AG04449 (cell line): ENCODE measurements at regions of chr3 and their contacts with region 1.

Region 1: DNA sequence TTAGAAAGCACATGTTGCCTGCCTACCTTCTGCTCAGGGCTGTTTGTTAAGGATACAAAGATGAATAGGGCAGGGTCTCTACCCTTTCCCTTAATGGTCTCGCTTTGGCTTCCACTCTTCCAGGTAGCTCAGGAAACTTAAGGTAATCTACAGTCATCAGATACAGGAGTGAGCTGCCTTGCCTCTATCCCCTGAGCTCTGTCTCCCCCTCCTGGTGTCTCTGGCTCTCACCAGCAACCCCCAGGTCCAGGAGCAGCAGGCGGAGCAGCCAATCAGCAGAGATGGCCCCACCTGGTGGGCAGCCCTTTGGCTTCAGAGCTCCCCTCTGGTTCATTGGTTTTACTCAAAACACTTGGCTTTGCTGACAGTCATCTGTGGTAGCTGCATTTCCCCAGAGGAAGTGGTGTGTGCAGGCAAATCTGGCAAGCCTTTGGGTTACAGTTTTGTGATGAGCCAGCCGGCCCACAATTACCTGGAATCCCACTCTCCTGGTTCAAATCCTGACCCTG is 8.5 kb upstream of the CX3CR1 start:
- DNase-seq: no peak
- H3K4me3 ChIP-seq: no peak overlapping the region
- CTCF ChIP-seq: peak; percentile 93

Region 2: GRCh38 chr3:39101022-39101689 is 187.2 kb before region 1 on chr3:
- CTCF ChIA-PET with region 1: interaction called, 41 read pairs
- POLR2A ChIA-PET with region 1: no interaction called
- DNase-seq: no peak
- H3K4me3 ChIP-seq: no peak overlapping the region
- CTCF ChIP-seq: peak; percentile 68

Region 3: GRCh38 chr3:39126532-39127071 is 161.8 kb before region 1 on chr3:
- CTCF ChIA-PET with region 1: interaction called, 545 read pairs
- POLR2A ChIA-PET with region 1: no interaction called
- DNase-seq: no peak
- H3K4me3 ChIP-seq: no peak overlapping the region
- CTCF ChIP-seq: peak; percentile 80

Region 4: DNA sequence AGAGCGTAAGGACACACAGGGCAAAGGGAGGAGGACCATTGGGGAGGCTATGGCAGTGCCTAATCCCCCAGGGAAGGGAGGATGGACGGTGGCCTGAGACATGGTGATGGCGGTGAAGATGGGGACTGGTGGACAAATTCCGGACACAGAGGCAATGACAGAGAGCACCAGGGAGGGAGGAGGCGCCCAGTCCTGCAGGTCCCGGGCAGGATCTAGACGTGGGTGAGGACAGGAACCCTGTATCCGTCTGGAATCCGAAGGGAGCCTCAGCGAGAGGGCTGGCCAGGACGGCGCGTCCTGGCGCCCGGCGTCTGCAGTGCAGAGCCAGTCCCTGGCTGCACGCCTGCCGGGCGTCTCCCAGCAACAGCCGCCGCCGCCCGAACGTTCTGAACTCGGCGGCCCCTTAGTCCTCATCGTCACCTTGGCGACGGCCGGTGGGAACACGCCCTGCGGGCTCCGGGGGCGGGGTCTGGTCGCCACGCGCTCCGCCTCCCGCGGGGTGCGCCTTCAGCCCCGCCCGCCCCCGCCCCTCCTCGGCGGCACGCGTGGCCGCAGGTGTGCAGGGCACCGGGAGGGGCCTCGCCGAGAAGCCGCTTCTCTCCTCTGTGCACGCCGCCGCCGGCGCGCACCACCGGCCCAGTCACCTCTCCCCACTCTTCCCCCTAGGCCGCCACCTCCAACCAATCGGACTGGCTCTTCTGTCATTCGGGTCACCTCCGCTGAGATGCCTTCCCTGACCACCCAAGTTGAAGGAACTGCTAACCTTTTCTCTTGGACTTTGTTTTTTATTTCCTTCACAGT is 107.6 kb before region 1 on chr3:
- CTCF ChIA-PET with region 1: interaction called, 574 read pairs
- POLR2A ChIA-PET with region 1: no interaction called
- DNase-seq: no peak
- H3K4me3 ChIP-seq: peak overlapping the region; percentile 44
- CTCF ChIP-seq: peak; percentile 23

Region 5: DNA sequence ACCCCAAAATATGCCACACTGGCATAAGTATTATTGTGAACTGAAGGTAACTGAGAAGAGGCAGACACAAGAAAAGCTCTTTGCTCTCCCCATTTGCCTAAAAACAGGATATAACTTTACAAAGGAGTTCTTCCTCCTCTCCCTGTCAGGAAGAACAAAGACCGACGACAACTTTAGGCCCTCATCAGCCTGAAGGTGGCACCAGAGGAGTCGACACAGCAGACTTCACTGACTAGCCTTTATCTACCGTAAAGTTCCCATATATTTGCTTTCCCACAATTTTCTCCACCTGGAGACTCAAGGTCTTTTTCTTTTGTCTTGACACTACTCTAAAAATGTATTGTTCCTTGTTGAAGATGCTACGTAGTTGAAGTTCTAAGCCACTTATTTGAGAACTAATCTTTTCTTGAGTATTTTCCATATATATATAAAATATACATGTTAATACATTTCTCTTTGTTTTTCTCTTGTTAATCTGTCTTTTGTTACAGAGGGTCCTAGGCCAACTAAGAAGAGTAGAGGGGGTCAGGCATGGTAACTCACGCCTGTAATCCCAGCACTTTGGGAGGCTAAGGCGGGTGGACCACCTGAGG is 79.8 kb before region 1 on chr3:
- CTCF ChIA-PET with region 1: interaction called, 188 read pairs
- POLR2A ChIA-PET with region 1: no interaction called
- DNase-seq: no peak
- H3K4me3 ChIP-seq: no peak overlapping the region
- CTCF ChIP-seq: peak; percentile 77

Region 6: GRCh38 chr3:39267631-39268548 is 20.5 kb before region 1 on chr3:
- CTCF ChIA-PET with region 1: interaction called, 58 read pairs
- POLR2A ChIA-PET with region 1: no interaction called
- DNase-seq: no peak
- H3K4me3 ChIP-seq: no peak overlapping the region
- CTCF ChIP-seq: no peak